Spleen (tissue), 13 donors: ENCODE measurements at regions of chrX and their contacts with region 1.

Region 1: GRCh38 chrX:4547213-4547836 is 833.9 kb upstream of the PRKX start:
- DNase-seq: peak; percentile 79
- H3K4me3 ChIP-seq: no peak overlapping the region
- H3K27ac ChIP-seq: no peak overlapping the region
- H3K4me1 ChIP-seq: no peaks in the 10 kb centered on the region
- H3K27me3 ChIP-seq: no peaks in the 10 kb centered on the region
- CTCF ChIP-seq: peak; percentile 29 to 94 (median 80)
- POLR2A ChIP-seq: no peak

Region 2: GRCh38 chrX:4670615-4671014 is 123.3 kb after region 1 on chrX:
- intact Hi-C with region 1: no loop called
- DNase-seq: no peak
- H3K4me3 ChIP-seq: no peak overlapping the region
- H3K27ac ChIP-seq: no peak overlapping the region
- H3K4me1 ChIP-seq: no peaks in the 10 kb centered on the region
- H3K27me3 ChIP-seq: no peaks in the 10 kb centered on the region
- CTCF ChIP-seq: no peak
- POLR2A ChIP-seq: no peak

Region 3: DNA sequence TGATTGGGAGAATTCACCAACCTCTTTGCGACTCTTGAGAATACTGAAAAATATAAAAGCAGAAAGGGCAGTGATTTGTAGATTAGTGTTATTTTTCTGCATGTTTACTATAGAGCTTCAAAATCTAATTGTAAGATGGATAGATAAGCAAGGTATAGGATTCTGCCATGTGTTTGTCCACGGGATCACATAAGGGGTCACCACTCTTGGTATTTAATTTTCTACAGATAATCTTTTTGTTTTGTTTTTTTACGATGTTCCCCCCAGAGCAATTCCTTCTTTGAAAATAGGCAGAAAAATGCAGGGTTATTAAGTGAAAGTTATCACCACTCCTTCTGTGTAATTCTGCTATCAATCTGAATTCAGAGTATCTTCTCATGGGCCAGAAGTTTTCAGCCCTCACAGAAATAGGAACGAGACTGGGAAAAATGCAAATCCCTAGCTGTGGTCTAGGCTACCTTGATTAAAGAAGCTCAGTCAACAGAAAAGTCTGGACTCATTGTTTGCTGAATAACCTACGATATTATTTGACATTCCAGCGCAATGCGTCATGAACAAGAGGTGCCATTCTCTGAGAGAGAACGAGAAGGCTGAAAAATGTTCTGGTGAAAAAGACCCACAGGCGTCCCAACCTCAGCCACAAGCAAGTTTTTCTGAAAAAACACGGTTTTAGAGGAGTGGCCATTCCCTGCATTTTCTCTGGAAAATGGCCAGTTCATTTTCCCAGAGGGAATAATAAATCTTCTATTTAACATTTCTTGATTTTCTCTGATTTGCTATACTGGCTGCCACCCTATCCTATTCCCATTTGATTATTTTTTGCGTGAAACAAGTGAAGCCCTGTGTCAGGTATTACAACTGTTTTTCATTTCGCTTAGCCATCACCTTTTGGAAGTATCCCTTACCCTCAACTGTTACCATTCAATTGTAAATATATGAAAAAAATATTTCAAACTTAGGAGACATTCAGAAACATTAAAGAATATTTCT is 283.5 kb after region 1 on chrX:
- intact Hi-C with region 1: no loop called
- DNase-seq: no peak
- H3K4me3 ChIP-seq: no peak overlapping the region
- H3K27ac ChIP-seq: no peak overlapping the region
- H3K4me1 ChIP-seq: no peaks in the 10 kb centered on the region
- H3K27me3 ChIP-seq: no peaks in the 10 kb centered on the region
- CTCF ChIP-seq: no peak
- POLR2A ChIP-seq: no peak

Region 4: GRCh38 chrX:5113128-5113527 is 565.8 kb after region 1 on chrX:
- intact Hi-C with region 1: loop called (anchors 5 kb)
- DNase-seq: no peak
- H3K4me3 ChIP-seq: no peak overlapping the region
- H3K27ac ChIP-seq: no peak overlapping the region
- H3K4me1 ChIP-seq: no peaks in the 10 kb centered on the region
- H3K27me3 ChIP-seq: no peaks in the 10 kb centered on the region
- CTCF ChIP-seq: peak in 4 of 11 experiments; percentile 26 to 37 (median 32)
- POLR2A ChIP-seq: no peak